ENCODE measurements at regions of chr10 and their contacts with region 1.

Region 1: DNA sequence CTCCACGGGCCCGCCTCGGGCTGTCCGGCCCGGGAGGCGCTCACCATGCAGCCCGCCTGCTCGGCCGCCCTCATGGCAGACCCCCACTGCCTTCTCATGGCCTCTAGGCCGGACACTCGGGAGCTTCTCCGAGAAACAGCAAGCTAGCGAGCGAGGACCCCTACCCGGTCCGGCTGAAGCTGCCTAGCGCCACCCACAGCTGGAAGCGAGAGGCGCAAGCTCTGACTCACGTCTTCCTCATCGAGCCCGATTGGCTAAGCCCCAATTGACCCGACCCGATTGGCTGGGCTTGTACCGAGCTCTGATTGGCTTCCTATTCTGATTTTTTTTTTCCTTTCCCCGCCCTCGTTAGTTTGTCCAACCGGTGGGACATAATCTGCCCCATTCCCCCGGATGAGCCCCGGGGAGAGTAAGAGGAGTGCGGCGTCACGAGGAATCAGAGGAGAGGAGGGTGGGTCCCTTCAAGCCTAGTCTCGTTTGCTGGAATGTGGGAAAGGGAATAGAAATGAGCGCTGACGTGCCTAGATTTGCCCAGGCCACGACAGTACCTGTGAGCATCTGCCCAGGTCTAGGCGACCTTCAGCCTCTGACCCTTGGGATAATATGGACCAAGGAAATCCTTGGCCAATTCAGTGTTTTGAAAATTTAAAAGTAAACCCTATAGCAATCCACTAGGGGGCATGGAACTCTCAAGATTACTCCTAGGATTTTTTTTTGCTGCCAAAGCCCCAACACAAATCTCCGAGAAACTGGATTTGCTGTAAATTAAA is at the start of gene TYSND1:
- DNase-seq: peak; percentile 98
- ATAC-seq: peak; percentile 89
- H3K4me3 ChIP-seq: peak within 1 kb of the TSS; percentile 74 to 81
- H3K27ac ChIP-seq: peak within 1 kb of the TSS; percentile 86
- H3K4me1 ChIP-seq: peaks cover 8 to 26% of the 10 kb centered on the region in 2 experiments; a peak in 3 of 4 replicates
- H3K27me3 ChIP-seq: no peaks in the 10 kb centered on the region
- CTCF ChIP-seq: peak; percentile 60 to 81 (median 61)
- POLR2A ChIP-seq: peak; percentile 95
- RAD21 ChIP-seq: peak; percentile 71
- total RNA-seq, gene TYSND1: 13.6 TPM

Region 2: DNA sequence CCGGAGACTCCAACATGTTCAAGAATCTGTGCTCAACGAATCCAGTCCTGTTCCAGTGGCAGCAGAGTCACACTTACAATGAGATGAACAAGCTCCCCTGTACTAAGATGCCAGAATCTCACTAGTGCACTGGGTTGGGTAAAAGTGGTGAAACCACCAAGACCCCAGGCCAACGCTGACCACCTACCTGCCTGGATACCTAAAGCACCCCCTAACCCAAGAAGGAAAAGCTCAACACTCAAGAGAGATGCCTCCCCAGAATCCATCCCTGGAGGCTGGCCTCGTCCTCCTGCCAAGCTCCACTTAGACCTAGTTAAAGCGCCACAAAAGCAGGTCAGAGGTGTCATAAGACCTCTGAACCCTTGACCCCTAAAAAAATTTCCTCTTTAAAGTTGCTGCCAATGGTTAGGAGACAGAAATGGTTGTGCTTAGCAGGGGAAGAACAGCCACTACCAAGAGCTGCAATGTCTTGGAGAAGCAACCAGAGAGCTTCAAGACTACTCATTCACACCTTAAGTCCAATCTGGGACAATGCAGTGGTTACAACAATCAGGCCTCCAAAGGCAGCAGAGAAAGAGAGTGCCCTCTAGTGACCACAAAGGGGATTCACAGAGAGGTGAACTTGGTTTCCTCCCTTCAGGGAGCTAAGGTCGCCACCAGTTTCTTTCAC is 188.7 kb before region 1 on chr10:
- CTCF ChIA-PET with region 1: interaction called, 12 read pairs
- POLR2A ChIA-PET with region 1: no interaction called
- RAD21 ChIA-PET with region 1: interaction called in 1 of 2 experiments, 3 read pairs
- intact Hi-C with region 1: no loop called
- DNase-seq: peak; percentile 46
- ATAC-seq: peak; percentile 92
- H3K4me3 ChIP-seq: no peak overlapping the region
- H3K27ac ChIP-seq: no peak overlapping the region
- H3K4me1 ChIP-seq: no peaks in the 10 kb centered on the region
- H3K27me3 ChIP-seq: no peaks in the 10 kb centered on the region
- CTCF ChIP-seq: peak; percentile 64 to 95 (median 86)
- POLR2A ChIP-seq: no peak
- RAD21 ChIP-seq: peak; percentile 73

Region 3: DNA sequence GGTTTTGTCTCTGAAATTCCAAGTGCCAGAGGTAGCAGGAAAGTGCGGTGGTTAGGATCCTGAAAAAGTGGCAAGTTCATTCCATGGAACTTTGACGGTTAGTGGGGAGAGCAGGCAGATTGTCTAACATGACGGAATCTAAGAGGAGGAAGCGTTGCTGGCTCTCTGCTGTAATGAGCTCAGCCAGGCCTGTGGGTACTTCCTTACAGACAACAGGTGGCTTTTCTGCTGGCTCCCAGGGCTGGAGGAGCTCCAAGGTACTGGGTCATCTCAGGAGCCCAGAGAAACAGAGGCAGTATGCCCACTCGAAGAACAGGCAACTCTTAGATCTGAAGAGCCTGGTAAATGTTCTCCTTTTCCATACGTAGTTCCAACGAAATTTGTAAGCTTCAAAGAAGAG is 11.0 kb before region 1 on chr10:
- CTCF ChIA-PET with region 1: interaction called, 23 read pairs
- POLR2A ChIA-PET with region 1: interaction called, 4 read pairs
- RAD21 ChIA-PET with region 1: interaction called in 1 of 2 experiments, 3 read pairs
- intact Hi-C with region 1: no loop called
- DNase-seq: no peak
- ATAC-seq: no peak
- H3K4me3 ChIP-seq: no peak overlapping the region
- H3K27ac ChIP-seq: no peak overlapping the region
- H3K4me1 ChIP-seq: peaks cover 25 to 51% of the 10 kb centered on the region in 2 experiments
- H3K27me3 ChIP-seq: no peaks in the 10 kb centered on the region
- CTCF ChIP-seq: no peak
- POLR2A ChIP-seq: no peak
- RAD21 ChIP-seq: no peak

Region 4: DNA sequence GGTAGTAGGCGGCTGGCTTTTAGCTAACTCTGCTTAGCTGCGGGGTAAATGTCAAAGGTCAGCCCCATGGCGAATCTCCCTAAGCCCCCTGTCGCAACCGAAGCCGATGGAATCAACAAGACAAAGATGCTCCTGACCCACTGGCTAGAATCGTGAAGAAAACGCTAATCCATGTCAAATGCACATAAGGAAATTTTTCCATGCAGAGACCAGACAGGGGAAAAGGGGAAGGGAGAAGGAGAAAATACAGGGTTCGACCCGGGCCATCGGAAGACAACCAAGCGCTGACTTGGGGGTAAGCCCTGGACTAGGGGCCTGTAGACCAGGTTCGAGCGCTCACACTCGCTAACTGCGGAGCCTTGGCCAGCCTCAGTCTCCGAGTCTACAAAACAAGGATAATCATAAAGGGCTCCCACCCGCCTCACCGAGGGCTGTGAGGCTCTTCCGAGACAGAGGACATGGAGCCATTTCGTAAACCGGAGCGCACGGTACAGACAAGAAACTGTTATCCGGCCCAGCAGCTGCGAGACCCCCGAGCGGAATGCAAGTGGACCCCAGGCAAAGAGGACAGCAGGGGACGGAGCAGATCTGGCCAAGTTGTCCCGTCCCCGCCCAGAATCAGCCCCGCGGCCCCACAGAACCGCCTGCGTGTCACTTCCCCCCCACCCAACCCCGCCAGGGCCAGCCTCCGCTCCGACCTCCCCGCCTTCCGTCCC is 23.1 kb after region 1 on chr10:
- CTCF ChIA-PET with region 1: interaction called, 19 read pairs
- POLR2A ChIA-PET with region 1: interaction called, 18 read pairs
- RAD21 ChIA-PET with region 1: interaction called in 1 of 2 experiments, 4 read pairs
- intact Hi-C with region 1: loop called (anchors 2 kb)
- DNase-seq: no peak
- ATAC-seq: peak; percentile 58
- H3K4me3 ChIP-seq: peak overlapping the region; percentile 86 to 99
- H3K27ac ChIP-seq: peak overlapping the region; percentile 67
- H3K4me1 ChIP-seq: peaks cover 5 to 32% of the 10 kb centered on the region in 2 experiments; a peak in 3 of 4 replicates
- H3K27me3 ChIP-seq: no peaks in the 10 kb centered on the region
- CTCF ChIP-seq: no peak
- POLR2A ChIP-seq: no peak
- RAD21 ChIP-seq: no peak

Region 5: DNA sequence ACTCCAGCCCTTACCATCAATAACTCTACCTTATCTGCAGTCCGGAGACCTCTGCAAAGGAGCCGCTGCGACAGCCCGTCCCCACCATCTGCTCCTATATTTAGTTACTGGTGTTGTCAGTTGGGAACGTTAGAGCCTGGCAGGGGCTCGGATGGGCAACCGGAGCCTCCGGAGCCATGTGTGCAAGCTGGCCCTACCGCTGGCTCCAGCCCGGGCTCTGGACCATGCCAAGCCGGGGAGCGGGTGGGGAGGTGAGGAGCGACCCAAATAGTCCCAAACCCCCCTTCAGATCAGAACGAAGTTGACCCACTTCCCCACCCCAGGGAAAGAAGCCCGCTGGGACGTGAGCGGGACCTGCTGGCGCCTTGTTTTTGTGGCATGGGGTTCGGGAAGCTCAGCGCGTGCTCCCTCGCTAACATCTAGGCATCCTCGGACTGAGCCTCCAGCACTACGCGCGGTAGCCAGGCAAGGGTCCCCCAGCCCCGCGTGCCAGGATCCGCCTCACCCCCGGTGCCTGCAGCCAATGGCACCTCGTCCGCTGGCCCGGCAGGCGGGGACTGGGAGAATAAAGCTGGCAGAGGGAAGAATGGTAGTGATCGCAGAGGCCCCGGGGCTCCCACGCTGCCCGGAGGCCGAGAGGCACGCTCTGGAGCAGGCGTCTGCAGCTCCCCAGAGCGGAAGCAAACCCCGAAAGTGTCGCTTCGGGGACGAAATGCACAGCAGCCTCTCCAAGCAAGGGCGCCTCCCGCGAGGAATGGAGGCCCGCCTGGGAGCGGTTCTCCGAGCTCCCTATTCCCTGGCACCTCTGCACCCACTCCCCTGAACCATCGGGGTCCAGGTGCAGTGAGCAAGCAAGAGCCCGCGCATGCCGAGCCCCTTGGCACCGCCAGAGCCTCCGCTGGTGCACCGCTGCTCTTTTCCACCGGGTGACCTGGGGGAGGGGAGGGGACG is 235.1 kb after region 1 on chr10:
- CTCF ChIA-PET with region 1: interaction called, 14 read pairs
- POLR2A ChIA-PET with region 1: no interaction called
- RAD21 ChIA-PET with region 1: no interaction called
- intact Hi-C with region 1: loop called (anchors 5 kb)
- DNase-seq: no peak
- ATAC-seq: peak; percentile 37
- H3K4me3 ChIP-seq: peak overlapping the region; percentile 70
- H3K27ac ChIP-seq: peak overlapping the region; percentile 60
- H3K4me1 ChIP-seq: peaks cover 32 to 48% of the 10 kb centered on the region in 2 experiments
- H3K27me3 ChIP-seq: no peaks in the 10 kb centered on the region
- CTCF ChIP-seq: no peak
- POLR2A ChIP-seq: no peak
- RAD21 ChIP-seq: no peak

Measured in HCT116 (cell line).